ENCODE measurements at regions of chr14 and their contacts with region 1.

Region 1: DNA sequence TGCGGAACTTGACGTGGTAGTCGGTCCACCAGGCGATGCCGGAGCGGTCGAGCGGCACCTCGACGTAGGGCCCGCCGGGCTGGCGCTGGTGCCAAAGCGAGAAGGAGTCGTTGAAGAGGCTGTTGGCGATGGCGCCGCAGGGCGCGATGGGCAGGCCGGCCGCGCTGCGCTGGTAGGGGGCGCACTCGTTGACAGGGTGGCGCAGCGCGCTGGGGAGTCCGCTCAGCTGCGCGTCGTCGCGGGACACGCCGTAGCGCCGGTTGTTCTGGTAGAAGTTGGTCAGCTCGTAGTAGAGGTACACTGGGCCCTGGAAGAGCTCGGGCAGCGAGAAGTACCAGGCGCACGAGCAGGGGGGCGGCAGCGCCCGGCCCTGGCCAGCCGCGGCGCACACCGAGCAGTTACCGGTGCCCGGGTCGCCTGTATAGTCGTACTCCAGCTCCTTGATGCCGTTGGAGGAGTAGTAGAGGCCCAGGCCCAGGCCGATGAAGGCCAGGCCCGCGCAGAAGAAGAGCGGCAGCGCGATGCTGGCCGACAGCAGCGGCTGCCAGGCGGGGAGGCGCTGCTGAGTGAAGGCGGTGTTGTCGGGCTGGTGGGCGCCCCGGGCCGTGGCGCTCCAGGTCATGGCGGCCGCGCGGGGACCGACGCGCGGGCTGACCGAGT is 482 bp downstream of the TMEM30B start:
- DNase-seq: peak in 1 of 2 experiments; percentile 79
- H3K4me3 ChIP-seq: peak overlapping the region; percentile 59 to 74 (median 62)
- H3K27ac ChIP-seq: no peak overlapping the region
- H3K4me1 ChIP-seq: peaks cover 0 to 4% (median 1%) of the 10 kb centered on the region in 4 experiments; a peak in 3 of 7 replicates
- H3K27me3 ChIP-seq: peaks cover 11 to 22% (median 19%) of the 10 kb centered on the region in 4 experiments; a peak in 6 of 7 replicates
- CTCF ChIP-seq: peak; percentile 26 to 43 (median 31)
- EP300 ChIP-seq: no peak
- POLR2A ChIP-seq: no peak
- RAD21 ChIP-seq: no peak

Region 2: DNA sequence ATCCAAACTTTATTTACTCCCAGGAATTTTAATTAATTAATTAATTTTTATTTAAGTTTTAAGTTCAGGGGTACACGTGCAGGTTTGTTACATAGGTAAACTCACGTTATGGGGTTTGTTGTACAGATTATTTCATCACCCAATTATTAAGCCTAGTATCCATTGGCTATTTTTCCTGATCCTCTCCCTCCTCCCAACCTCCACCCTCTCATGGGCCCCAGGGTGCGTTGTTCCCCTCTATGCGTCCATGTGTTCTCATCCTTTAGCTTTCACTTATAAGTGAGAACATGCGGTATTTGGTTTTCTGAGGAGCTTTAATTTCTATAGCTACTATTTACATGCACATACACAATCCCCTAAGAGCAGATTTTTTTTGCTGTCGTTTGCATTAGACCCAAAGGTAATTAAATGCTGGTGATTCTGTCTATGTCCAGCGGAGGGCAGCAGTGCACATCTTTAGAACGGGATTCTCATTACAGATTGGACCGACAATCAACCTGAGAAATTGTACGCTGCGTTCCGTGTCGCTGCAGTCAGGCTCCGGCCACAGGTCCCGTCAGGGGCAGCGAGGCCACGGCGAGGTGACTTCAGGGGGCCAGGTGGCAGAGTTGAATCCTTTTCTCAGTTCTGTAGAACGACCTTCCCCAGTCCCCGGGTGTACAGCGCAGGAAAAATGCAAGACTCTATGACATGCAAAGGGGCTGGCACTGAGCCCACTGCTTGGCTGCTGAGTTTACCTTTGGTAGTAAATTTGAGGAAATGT is 11.2 kb before region 1 on chr14:
- CTCF ChIA-PET with region 1: interaction called, 52 read pairs
- POLR2A ChIA-PET with region 1: interaction called, 4 read pairs
- DNase-seq: peak in 1 of 2 experiments; percentile 80
- H3K4me3 ChIP-seq: peak overlapping the region in 3 of 4 experiments; percentile 27 to 47 (median 32); a peak in 4 of 8 replicates
- H3K27ac ChIP-seq: no peak overlapping the region
- H3K4me1 ChIP-seq: no peaks in the 10 kb centered on the region
- H3K27me3 ChIP-seq: no peaks in the 10 kb centered on the region; a peak in 2 of 7 replicates
- CTCF ChIP-seq: peak in 2 of 3 experiments; percentile 68 to 81; a peak in 3 of 4 replicates
- EP300 ChIP-seq: no peak
- POLR2A ChIP-seq: no peak
- RAD21 ChIP-seq: peak; percentile 79 to 84

Region 3: GRCh38 chr14:61337893-61338292 is 57.2 kb after region 1 on chr14:
- CTCF ChIA-PET with region 1: no interaction called
- POLR2A ChIA-PET with region 1: no interaction called
- DNase-seq: no peak
- H3K4me3 ChIP-seq: no peak overlapping the region
- H3K27ac ChIP-seq: no peak overlapping the region
- H3K4me1 ChIP-seq: peaks cover 0 to 4% (median 0%) of the 10 kb centered on the region in 4 experiments; a peak in 1 of 7 replicates
- H3K27me3 ChIP-seq: no peaks in the 10 kb centered on the region
- CTCF ChIP-seq: no peak
- EP300 ChIP-seq: no peak
- POLR2A ChIP-seq: no peak
- RAD21 ChIP-seq: no peak